Ovary (tissue), 10 donors: ENCODE measurements at regions of chr9 and their contacts with region 1.

Region 1: DNA sequence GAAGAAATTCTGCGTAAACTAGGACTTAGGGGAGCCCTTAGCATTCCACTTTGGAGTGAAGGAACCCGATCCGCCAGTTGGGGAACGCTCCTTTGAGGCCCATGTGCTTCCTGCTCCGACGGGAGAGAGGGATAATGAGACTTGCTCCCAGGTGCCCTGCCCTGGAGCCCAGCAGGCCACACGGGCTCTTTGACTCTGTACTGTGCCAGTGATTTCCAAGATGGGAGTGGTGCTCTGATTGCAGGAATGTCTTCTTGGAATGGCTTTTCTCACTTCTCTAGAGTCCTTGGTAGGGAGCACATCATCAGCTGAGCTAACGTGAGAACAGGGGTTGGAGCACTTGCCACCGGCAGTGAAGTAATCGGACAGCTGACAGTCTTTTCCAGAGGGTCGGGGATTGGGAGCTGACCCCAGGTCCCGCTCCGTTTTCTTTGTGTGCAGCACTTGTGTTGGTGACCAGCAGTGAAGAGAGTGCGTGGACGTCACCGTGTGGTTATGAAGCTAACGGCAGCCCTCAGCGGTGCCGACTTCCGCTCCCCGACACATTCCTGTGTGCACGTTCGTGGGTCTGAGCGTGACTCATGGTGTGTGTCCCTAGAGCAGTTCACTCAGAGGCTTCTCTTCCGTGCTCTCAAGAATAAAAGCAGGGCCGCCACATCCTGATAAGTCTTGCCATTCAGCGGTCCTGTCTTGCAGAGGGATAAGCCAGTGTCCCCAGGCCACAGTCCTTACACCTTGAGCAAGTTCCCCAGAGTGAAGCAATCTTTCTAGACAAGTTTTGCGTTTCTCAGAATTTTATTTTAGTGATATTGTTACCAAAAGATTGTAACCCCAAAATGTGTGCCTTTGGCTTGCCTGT is 25.6 kb downstream of the ABL1 start:
- DNase-seq: peak; percentile 79 to 88 (median 83)
- H3K4me3 ChIP-seq: no peak overlapping the region
- H3K27ac ChIP-seq: peak overlapping the region in 1 of 2 donors; percentile 53
- H3K4me1 ChIP-seq: peaks cover 5% of the 10 kb centered on the region
- H3K27me3 ChIP-seq: no peaks in the 10 kb centered on the region
- CTCF ChIP-seq: peak in 2 of 3 donors; percentile 64 to 71
- EP300 ChIP-seq: no peak
- POLR2A ChIP-seq: no peak

Region 2: DNA sequence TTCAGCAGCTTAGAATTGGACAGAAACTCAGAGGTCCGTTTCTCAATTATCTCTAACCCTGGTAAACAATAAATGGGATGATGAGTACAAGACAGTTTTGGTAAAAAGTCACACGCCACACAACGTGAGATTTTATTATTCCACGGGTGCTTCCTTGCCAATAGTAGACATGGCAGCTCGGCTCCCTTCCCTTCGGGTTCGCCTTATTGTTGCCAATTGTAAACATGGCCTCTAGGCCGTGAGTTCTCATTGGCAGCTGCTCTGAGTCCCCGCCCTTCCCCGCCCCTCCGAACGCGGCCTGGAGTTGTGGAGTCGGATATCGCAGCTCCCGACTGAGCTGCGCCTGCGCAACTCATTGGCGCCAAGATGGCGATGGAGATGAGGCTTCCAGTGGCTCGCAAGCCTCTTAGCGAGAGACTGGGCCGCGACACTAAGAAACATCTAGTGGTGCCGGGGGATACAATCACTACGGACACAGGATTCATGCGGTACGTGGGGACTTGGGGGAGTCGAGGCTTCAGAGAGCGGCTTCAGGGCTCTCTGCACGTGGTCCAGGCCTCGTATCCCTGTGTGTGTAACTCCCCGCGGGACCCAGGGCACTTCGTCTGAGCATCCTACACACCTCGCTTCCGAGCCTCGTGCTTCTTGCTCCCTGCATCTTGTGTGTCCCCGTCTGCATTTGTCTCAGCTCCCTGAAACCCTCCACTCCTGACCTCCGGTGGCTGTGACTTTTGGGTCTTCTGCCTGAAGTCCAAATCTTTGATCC is 167.1 kb before region 1 on chr9 and contains the start of gene EXOSC2:
- intact Hi-C with region 1: no loop called
- DNase-seq: peak; percentile 97 to 98 (median 97)
- H3K4me3 ChIP-seq: peak within 1 kb of the TSS; percentile 87
- H3K27ac ChIP-seq: peak within 1 kb of the TSS in 1 of 2 donors; percentile 54
- H3K4me1 ChIP-seq: peaks cover 8% of the 10 kb centered on the region
- H3K27me3 ChIP-seq: no peaks in the 10 kb centered on the region
- CTCF ChIP-seq: no peak
- EP300 ChIP-seq: no peak
- POLR2A ChIP-seq: peak; percentile 79
- total RNA-seq, gene EXOSC2: 14.7 to 40.1 (median 33.8) TPM

Region 3: DNA sequence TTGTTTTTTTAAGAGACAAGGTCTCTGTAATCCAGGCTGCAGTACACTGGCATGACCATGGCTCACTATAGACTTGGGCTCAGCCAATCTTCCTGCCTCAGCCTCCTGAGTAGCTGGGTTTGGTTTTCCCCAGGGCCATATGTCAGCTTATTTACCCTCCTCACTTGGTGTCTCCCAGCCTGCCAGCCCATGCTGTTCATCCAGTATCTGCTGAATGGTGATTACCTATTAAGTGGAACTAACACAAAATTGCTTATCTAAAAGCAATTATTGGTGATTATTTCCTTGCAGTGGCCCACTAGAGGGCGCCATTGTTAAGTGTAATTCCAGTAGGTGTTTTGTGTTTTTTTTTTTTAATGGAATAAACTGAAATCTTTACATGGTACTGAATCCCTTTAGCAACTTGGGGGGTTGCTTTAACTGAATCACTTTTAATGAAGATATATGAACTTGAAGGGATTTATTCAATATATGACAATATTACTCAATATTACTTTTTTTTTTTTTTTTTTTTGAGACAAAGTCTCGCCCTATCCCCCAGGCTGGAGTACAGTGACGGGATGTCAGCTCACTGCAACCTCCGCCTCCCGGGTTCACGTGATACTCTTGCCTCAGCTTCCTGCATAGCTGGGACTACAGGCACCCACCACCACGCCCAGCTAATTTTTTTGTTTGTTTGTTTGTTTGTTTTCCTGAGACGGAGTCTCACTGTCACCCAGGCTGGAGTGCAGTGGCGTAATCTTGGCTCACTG is 153.3 kb before region 1 on chr9:
- intact Hi-C with region 1: loop called (anchors 2 to 5 kb)
- DNase-seq: peak; percentile 44 to 80 (median 61)
- H3K4me3 ChIP-seq: no peak overlapping the region
- H3K27ac ChIP-seq: no peak overlapping the region
- H3K4me1 ChIP-seq: no peaks in the 10 kb centered on the region
- H3K27me3 ChIP-seq: no peaks in the 10 kb centered on the region
- CTCF ChIP-seq: peak; percentile 66 to 80 (median 75)
- EP300 ChIP-seq: no peak
- POLR2A ChIP-seq: no peak

Region 4: GRCh38 chr9:130712564-130713285 is 148.0 kb before region 1 on chr9:
- intact Hi-C with region 1: loop called (anchors 2 to 5 kb)
- DNase-seq: peak; percentile 98 to 99 (median 98)
- H3K4me3 ChIP-seq: peak overlapping the region; percentile 98
- H3K27ac ChIP-seq: peak overlapping the region; percentile 95 to 98
- H3K4me1 ChIP-seq: peaks cover 2% of the 10 kb centered on the region
- H3K27me3 ChIP-seq: no peaks in the 10 kb centered on the region
- CTCF ChIP-seq: peak in 2 of 3 donors; percentile 15 to 16
- EP300 ChIP-seq: no peak
- POLR2A ChIP-seq: peak; percentile 64

Region 5: DNA sequence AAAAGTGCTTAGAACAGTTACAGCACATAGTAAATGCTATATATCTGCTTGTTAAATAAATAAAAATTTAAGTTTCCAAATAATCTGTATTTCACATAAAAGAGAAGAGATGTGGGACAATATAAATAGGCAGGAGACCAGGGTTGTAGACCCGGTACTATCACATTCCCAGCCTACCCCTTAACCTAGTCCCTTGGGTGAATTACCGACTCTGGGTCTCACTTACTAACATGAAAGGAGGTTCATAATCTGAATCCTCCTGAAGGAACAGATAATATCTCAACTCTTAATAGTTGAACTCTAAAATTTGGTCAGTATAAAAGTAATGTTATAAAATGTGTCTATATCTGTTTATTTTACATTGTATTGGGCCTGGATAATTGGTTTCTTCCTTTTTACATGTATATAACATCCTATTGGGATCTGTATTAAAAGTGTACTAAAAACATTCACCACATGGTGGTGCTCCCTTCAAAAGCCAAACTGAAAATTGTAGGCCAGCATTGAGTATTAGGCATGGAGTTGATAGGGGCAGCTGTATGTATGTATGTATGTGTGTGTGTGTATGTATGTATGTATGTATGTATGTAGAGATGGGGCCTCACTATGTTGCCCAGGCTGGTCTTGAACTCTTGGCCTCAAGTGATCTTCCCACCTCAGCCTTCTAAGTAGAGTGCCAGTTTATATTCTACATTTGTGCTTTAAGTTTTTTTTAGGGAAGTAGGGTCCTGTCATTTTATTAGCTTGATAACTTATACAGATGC is 89.8 kb before region 1 on chr9:
- intact Hi-C with region 1: loop called (anchors 5 kb)
- DNase-seq: no peak
- H3K4me3 ChIP-seq: no peak overlapping the region
- H3K27ac ChIP-seq: no peak overlapping the region
- H3K4me1 ChIP-seq: peaks cover 1% of the 10 kb centered on the region
- H3K27me3 ChIP-seq: no peaks in the 10 kb centered on the region
- CTCF ChIP-seq: peak; percentile 57 to 88 (median 77)
- EP300 ChIP-seq: no peak
- POLR2A ChIP-seq: no peak

Region 6: DNA sequence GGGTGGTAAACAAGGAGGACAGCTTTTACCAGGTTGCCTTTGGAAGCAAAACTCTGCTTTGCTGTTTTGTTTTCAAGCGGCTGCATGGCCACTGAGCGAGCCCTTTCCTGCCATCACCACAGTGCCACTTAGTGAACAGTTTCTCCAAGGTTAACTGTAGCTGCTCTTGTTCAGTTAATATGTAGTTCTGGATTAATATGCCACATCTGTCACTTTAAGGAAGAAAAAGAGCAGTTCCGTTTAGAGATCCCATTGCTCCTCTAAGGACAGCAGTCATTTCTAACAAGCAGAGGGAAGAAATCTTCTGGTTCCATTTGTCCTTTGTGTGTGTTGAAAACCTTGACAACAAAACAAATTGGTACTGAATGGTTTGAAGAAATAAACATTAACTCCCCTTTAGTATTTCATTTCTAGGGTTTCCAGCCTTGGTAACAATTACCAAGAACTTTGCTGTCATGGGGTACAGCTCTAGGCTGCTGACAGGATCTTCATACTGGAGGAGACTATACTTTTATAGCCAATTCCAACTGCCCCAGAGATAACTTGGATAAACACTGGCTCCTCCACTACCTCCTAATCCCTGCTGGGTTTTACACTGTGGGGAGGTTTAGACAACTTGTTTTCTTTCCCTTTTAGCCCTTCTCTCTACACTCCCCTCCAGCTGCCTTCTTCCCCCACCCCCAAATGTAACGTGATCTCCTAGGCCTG is 35.9 kb before region 1 on chr9:
- intact Hi-C with region 1: no loop called
- DNase-seq: peak in 4 of 5 donors; percentile 51 to 63 (median 58)
- H3K4me3 ChIP-seq: no peak overlapping the region
- H3K27ac ChIP-seq: peak overlapping the region; percentile 68 to 84
- H3K4me1 ChIP-seq: peaks cover 11% of the 10 kb centered on the region
- H3K27me3 ChIP-seq: no peaks in the 10 kb centered on the region
- CTCF ChIP-seq: no peak
- EP300 ChIP-seq: no peak
- POLR2A ChIP-seq: no peak